Posterior vena cava (tissue), 2 donors: ENCODE measurements at regions of chr20 and their contacts with region 1.

Region 1: GRCh38 chr20:24001712-24002405 is 13.3 kb upstream of the GGTLC1 start:
- DNase-seq: no peak

Region 2: GRCh38 chr20:23106261-23106851 is 895.5 kb before region 1 on chr20:
- intact Hi-C with region 1: no loop called
- DNase-seq: peak; percentile 76

Region 3: DNA sequence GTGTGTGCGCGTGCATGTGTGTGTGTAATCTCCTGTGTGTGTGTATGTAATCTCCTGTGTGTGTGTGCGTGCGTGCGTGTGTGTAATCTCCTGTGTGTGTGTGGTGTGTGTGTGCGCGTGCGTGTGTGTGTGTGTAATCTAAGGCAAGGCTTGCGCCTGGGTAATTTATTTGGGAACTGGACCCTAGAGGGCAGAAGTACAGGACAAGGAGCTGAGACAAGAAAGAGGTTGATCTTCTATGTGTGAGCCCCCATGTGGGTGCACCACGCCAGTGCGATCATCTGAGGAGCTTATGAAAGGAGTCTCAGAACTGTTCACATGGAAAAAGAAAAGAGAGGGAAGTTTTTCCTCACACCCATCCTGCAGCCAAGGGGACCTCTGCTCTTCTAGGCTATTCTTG is 206.8 kb after region 1 on chr20:
- intact Hi-C with region 1: no loop called
- DNase-seq: no peak

Region 4: DNA sequence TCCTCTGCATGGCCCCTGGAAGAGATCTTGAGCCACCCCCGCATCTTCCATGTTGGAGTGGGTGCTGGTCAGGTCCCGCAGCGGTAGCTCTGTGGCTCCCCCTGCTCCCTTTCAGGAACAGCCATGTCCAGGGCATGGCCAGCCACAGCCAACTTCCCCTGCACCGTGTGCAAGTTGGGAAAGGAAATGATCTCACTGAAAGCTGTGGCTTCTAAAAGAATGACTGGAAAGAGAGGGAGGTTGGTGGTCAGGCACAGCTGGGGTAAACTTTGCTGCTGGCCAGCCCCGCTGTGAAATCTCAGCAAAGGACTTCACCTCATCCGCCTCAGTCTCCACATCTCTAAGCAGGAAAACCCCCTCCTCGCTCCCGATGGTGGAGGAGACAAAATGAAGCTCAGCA is 793.6 kb after region 1 on chr20:
- intact Hi-C with region 1: loop called in 1 of 2 experiments (anchors 10 kb)
- DNase-seq: no peak